Posterior vena cava (tissue), 2 donors: ENCODE measurements at regions of chr4 and their contacts with region 1.

Region 1: DNA sequence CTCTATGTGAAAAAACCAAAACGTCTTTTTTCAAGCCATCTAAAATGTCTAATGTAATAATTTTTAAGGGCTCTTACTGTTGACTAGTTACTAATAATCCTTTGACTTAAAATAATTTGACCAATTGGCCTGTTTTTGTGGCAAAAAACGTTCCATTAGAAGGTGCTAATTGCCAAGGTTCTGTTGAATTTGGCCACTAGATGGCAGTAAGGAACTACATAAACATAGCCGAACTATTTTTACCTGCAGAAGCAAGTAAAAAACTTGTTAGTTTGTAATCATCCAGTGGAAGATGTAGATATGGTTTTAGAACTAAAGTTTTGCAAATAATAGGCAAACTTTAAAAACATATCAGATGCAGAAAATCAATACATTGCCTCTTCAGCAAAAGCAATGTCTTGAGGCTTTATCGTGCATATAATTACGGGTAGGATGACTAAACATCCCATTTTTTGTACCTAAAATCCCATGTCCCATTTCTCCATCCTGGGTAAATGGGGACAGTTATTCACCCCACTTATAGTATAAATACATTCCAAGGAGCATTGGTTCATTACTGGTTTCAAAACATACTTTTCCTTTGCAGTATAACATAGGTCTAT is 57.6 kb downstream of the PROM1 start:
- DNase-seq: no peak

Region 2: DNA sequence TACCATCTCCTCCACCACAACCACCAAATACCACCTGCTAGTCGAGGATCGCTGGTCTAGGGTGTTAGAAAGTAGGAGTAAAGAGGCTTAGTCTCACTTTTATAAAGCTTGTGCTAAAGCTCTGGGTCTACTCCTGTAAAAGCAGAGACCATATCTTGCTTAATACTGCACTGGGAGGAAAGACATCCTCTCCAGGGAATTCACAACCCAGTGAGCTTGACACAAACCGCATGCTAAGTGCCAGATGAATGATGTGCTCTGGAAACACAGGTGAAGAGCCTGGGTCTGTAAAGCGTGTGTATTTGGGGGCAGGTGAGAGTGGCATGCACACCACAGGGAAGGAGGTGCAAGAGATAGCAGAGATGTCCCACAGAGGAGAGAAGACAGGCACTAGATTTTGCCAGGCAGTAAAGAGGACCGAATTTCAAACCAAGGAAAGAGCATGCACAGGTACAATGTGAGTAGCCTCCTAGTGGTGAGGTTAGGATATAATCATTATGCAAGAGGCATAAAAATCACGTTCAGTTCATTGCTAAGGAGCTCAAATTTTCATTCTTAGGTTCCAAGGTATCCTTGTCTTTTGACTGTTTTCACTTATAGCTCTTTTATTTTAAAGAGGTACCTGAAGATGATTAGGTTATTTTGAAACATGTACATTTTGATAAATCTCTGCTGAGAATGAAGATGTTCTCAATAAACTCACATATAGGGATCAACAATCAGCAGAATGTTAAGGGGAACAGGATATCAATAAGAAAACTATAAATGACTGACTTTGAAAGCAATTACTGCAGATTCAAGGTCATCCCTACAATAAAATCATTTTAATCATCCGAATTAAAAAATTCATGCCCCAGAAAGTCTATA is 179.3 kb after region 1 on chr4:
- intact Hi-C with region 1: loop called in 1 of 2 experiments (anchors 10 kb)
- DNase-seq: no peak

Region 3: GRCh38 chr4:16264798-16265197 is 238.5 kb after region 1 on chr4:
- intact Hi-C with region 1: loop called in 1 of 2 experiments (anchors 2 kb)
- DNase-seq: no peak